ENCODE measurements at regions of chr1 and their contacts with region 1.

Region 1: GRCh38 chr1:156104065-156104810 is 10.3 kb upstream of the LMNA start:
- DNase-seq: no peak
- ATAC-seq: peak; percentile 49
- H3K4me3 ChIP-seq: peak overlapping the region; percentile 15 to 26
- H3K27ac ChIP-seq: peak overlapping the region; percentile 96
- H3K4me1 ChIP-seq: peaks cover 80 to 99% of the 10 kb centered on the region in 2 experiments
- H3K27me3 ChIP-seq: no peaks in the 10 kb centered on the region
- CTCF ChIP-seq: no peak
- POLR2A ChIP-seq: peak; percentile 27
- RAD21 ChIP-seq: no peak

Region 2: GRCh38 chr1:155913969-155914757 is 190.1 kb before region 1 on chr1:
- CTCF ChIA-PET with region 1: no interaction called
- POLR2A ChIA-PET with region 1: no interaction called
- RAD21 ChIA-PET with region 1: no interaction called
- intact Hi-C with region 1: no loop called
- DNase-seq: no peak
- ATAC-seq: no peak
- H3K4me3 ChIP-seq: no peak overlapping the region
- H3K27ac ChIP-seq: no peak overlapping the region
- H3K4me1 ChIP-seq: peaks cover 0 to 23% of the 10 kb centered on the region in 2 experiments; a peak in 2 of 4 replicates
- H3K27me3 ChIP-seq: no peaks in the 10 kb centered on the region
- CTCF ChIP-seq: no peak
- POLR2A ChIP-seq: no peak
- RAD21 ChIP-seq: no peak

Region 3: DNA sequence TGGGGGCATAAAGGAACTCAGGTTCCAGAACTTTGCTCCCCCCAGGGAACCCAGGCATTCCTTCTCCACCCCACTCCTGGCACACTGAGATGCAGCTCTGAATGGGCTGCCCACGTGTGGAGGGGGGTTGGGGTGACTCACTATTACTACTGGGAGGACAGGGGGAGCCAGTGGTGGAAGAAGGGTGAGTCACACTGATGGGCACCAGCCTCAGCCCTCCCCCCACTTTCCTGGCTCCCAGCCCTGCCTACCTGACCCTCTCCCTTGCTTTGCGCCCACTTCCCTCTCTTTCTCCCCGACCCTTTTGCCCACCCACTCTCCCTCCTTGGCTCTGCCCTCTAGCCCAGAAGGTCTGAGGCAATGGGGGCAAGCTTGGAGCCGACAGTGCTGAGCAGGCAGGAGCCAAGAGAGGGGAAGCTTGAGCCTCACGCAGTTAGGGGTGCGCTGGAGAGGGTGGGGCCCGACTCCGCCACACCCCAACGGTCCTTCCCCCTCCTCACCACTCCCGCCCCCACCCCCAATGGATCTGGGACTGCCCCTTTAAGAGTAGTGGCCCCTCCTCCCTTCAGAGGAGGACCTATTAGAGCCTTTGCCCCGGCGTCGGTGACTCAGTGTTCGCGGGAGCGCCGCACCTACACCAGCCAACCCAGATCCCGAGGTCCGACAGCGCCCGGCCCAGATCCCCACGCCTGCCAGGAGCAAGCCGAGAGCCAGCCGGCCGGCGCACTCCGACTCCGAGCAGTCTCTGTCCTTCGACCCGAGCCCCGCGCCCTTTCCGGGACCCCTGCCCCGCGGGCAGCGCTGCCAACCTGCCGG is 10.1 kb after region 1 on chr1 and contains the start of gene LMNA:
- CTCF ChIA-PET with region 1: interaction called, 9 read pairs
- POLR2A ChIA-PET with region 1: interaction called, 28 read pairs
- RAD21 ChIA-PET with region 1: no interaction called
- intact Hi-C with region 1: no loop called
- DNase-seq: peak; percentile 90
- ATAC-seq: peak; percentile 80
- H3K4me3 ChIP-seq: peak within 1 kb of the TSS; percentile 96 to 99
- H3K27ac ChIP-seq: peak within 1 kb of the TSS; percentile 76
- H3K4me1 ChIP-seq: peaks cover 59 to 77% of the 10 kb centered on the region in 2 experiments
- H3K27me3 ChIP-seq: no peaks in the 10 kb centered on the region
- CTCF ChIP-seq: no peak
- POLR2A ChIP-seq: peak; percentile 75
- RAD21 ChIP-seq: no peak
- total RNA-seq, gene LMNA: 528 TPM

Region 4: GRCh38 chr1:156123356-156124196 is 19.3 kb after region 1 on chr1:
- CTCF ChIA-PET with region 1: interaction called, 189 read pairs
- POLR2A ChIA-PET with region 1: interaction called, 56 read pairs
- RAD21 ChIA-PET with region 1: interaction called, 7 to 43 read pairs
- intact Hi-C with region 1: no loop called
- DNase-seq: peak; percentile 91
- ATAC-seq: peak; percentile 39
- H3K4me3 ChIP-seq: peak overlapping the region; percentile 19 to 52
- H3K27ac ChIP-seq: peak overlapping the region; percentile 95
- H3K4me1 ChIP-seq: peaks cover 78 to 100% of the 10 kb centered on the region in 2 experiments
- H3K27me3 ChIP-seq: no peaks in the 10 kb centered on the region
- CTCF ChIP-seq: peak in 1 of 3 experiments; percentile 44; a peak in 3 of 6 replicates
- POLR2A ChIP-seq: no peak
- RAD21 ChIP-seq: no peak